CD4-positive, alpha-beta T cell (primary cell): ENCODE measurements at regions of chr1 and their contacts with region 1.

Region 1: DNA sequence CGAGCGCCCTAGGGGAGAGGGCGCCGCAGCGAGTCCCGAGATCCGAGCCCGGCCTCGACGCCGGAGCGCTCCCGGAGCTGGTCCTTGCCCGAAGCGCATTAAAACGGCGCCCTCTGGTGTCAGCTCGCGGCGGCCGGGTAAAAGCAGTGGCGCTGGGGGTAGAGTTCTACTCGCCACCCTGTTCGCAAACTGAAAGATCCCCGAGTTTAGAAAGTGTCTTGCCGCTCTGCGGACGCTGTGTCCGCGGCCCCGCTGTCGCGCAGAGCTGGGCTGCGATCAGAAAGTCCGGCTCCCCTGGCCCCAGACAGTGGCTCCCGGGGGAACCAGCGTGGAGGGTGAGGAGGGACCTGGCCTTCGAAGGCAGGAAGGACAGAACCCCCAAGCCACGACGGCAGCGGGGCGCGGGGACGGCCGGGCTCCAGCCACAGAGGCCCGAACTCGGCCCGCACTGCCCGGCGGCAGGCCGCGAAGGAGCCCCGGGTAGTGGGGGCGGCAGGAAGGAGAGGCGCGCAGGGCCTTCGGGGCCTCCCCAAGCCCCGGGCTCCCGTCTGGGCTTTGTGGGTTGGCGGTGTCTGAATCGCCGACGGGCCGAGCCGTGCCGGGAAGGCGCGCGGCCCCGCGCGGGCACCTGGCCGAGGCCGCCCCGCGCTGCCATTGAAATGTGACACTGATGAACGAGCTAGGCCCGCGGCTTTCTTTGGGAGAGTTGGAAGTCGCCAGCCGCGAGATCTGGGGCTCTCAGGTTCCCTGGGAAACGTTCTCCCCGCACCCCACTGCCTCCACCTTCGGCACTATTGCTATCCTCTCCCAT is 39.1 kb upstream of the NFIA start:
- DNase-seq: peak; percentile 68 to 88 (median 78)
- ATAC-seq: peak; percentile 97
- H3K4me3 ChIP-seq: peak overlapping the region; percentile 56
- H3K4me3 Mint-ChIP-seq: peak overlapping the region; percentile 78
- H3K27ac ChIP-seq: no peak overlapping the region
- H3K27ac Mint-ChIP-seq: no peak overlapping the region
- H3K4me1 ChIP-seq: peaks cover 8% of the 10 kb centered on the region
- H3K4me1 Mint-ChIP-seq: peaks cover 5% of the 10 kb centered on the region
- H3K27me3 ChIP-seq: peaks cover 14 to 24% of the 10 kb centered on the region in 2 experiments
- H3K27me3 Mint-ChIP-seq: peaks cover 68% of the 10 kb centered on the region
- CTCF ChIP-seq: peak; percentile 89

Region 2: DNA sequence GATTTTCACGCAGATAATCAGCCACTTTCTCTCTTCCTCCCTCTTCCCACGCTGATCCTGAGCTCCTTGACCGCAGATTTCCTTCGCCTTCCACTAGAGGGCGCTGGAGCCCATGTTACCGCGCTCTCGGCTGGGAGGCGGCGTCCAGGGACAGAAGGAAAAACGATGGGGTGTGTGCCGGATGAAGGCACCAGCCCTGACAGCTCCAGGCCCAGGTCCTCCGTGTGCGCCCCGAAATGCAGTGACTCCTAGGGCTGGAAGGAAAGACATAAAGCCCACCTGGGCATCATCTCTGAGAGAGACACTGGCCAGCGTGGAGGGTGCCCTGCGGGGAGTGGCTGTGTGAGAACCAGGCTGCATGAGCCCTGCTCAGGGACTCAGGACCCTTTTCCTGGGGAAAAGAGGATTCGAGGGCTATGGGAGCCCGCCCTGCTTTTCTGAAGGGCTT is 1071.7 kb before region 1 on chr1:
- CTCF ChIA-PET with region 1: no interaction called
- POLR2A ChIA-PET with region 1: no interaction called
- intact Hi-C with region 1: loop called (anchors 5 to 10 kb)
- DNase-seq: peak in 13 of 14 experiments; percentile 4 to 61 (median 30)
- ATAC-seq: no peak
- H3K4me3 ChIP-seq: no peak overlapping the region
- H3K4me3 Mint-ChIP-seq: no peak overlapping the region
- H3K27ac ChIP-seq: no peak overlapping the region
- H3K27ac Mint-ChIP-seq: no peak overlapping the region
- H3K4me1 ChIP-seq: peaks cover 5% of the 10 kb centered on the region
- H3K4me1 Mint-ChIP-seq: peaks cover 7% of the 10 kb centered on the region
- H3K27me3 ChIP-seq: peaks cover 7 to 14% of the 10 kb centered on the region in 2 experiments
- H3K27me3 Mint-ChIP-seq: peaks cover 30% of the 10 kb centered on the region
- CTCF ChIP-seq: peak; percentile 81

Region 3: GRCh38 chr1:61152469-61153105 is 109.4 kb after region 1 on chr1:
- CTCF ChIA-PET with region 1: no interaction called
- POLR2A ChIA-PET with region 1: no interaction called
- intact Hi-C with region 1: no loop called
- DNase-seq: no peak
- ATAC-seq: no peak
- H3K4me3 ChIP-seq: no peak overlapping the region
- H3K4me3 Mint-ChIP-seq: no peak overlapping the region
- H3K27ac ChIP-seq: no peak overlapping the region
- H3K27ac Mint-ChIP-seq: no peak overlapping the region
- H3K4me1 ChIP-seq: peaks cover 3% of the 10 kb centered on the region
- H3K4me1 Mint-ChIP-seq: peaks cover 14% of the 10 kb centered on the region
- H3K27me3 ChIP-seq: no peaks in the 10 kb centered on the region
- H3K27me3 Mint-ChIP-seq: no peaks in the 10 kb centered on the region
- CTCF ChIP-seq: no peak